ENCODE measurements at regions of chr7 and their contacts with region 1.

Region 1: DNA sequence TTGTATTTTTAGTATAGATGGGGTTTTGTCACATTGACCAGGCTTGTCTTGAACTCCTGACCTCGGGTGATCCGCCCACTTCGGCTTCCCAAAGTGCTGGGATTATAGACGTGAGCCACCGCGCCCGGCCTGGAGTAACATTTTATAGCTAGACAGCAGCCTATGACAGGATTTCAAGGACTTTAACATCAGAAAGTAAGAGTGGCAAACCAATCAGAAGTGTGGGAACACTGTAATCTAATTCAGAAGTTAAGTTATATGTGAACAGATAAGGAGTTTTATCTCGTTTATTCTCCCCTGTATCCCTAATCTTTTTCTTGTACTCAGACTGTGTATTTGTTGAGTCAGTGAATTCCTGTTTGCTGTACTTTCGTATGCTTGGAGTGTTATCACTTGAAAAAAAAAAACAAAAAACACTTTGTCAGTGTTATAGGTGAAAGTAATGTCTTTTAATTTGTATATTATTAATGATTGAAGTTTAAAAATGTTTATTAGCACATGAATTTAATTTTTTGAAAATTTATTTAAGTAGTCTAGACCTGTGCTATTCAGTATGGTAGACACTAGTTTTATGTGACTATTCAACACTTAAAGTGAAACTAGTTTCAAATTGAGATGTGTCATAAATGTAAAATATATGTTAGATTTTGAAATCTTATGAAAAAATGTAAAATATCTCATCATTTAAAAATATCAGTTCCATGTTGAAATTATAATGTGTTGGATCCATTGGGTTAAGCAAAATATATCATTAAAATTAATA is 38.6 kb downstream of the RSBN1L start:
- DNase-seq: no peak
- H3K4me3 ChIP-seq: no peak overlapping the region
- H3K27me3 ChIP-seq: no peaks in the 10 kb centered on the region
- CTCF ChIP-seq: no peak

Region 2: GRCh38 chr7:77415823-77416622 is 318.8 kb before region 1 on chr7 and contains the start of gene GSAP:
- CTCF ChIA-PET with region 1: no interaction called
- POLR2A ChIA-PET with region 1: interaction called, 11 read pairs
- DNase-seq: no peak
- H3K4me3 ChIP-seq: peak within 1 kb of the TSS; percentile 68
- H3K27me3 ChIP-seq: no peaks in the 10 kb centered on the region
- CTCF ChIP-seq: no peak
- polyA plus RNA-seq, gene GSAP: 3.7 and 7.0 TPM in 2 replicates

Region 3: GRCh38 chr7:77550586-77550985 is 184.3 kb before region 1 on chr7:
- CTCF ChIA-PET with region 1: no interaction called
- POLR2A ChIA-PET with region 1: no interaction called
- DNase-seq: peak; percentile 82
- H3K4me3 ChIP-seq: no peak overlapping the region
- H3K27me3 ChIP-seq: no peaks in the 10 kb centered on the region
- CTCF ChIP-seq: no peak

Region 4: DNA sequence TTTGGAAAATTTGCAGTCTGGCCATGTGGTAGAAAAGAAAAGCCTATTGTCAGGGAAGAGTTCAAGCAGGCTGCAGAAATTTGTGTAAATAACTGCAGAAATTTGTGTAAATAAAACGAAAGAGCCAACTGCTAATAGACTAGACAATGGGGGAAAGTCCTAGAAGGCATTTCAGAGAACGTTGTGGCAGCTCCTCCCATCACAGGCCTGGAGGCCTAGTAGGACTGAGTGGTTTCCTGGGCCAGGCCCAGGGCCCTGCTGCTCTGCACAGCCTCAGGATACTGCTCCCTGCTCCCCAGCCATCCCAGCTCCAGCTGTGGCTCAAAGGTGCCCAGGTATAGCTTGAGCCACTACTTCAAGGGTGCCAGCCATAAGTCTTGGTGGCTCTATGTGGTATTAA is 12.3 kb after region 1 on chr7:
- CTCF ChIA-PET with region 1: no interaction called
- POLR2A ChIA-PET with region 1: no interaction called
- DNase-seq: no peak
- H3K4me3 ChIP-seq: no peak overlapping the region
- H3K27me3 ChIP-seq: no peaks in the 10 kb centered on the region
- CTCF ChIP-seq: no peak

Region 5: GRCh38 chr7:77759294-77759889 is 24.6 kb after region 1 on chr7:
- CTCF ChIA-PET with region 1: no interaction called
- POLR2A ChIA-PET with region 1: no interaction called
- DNase-seq: no peak
- H3K4me3 ChIP-seq: no peak overlapping the region
- H3K27me3 ChIP-seq: no peaks in the 10 kb centered on the region
- CTCF ChIP-seq: peak; percentile 67

Region 6: GRCh38 chr7:77887567-77887966 is 152.7 kb after region 1 on chr7:
- CTCF ChIA-PET with region 1: no interaction called
- POLR2A ChIA-PET with region 1: no interaction called
- DNase-seq: peak; percentile 64
- H3K4me3 ChIP-seq: no peak overlapping the region
- H3K27me3 ChIP-seq: no peaks in the 10 kb centered on the region
- CTCF ChIP-seq: no peak